ENCODE measurements at regions of chr15 and their contacts with region 1.

Region 1: GRCh38 chr15:66404532-66404931 is 17.8 kb downstream of the MAP2K1 start:
- DNase-seq: no peak
- H3K4me3 ChIP-seq: no peak overlapping the region
- CTCF ChIP-seq: no peak

Region 2: DNA sequence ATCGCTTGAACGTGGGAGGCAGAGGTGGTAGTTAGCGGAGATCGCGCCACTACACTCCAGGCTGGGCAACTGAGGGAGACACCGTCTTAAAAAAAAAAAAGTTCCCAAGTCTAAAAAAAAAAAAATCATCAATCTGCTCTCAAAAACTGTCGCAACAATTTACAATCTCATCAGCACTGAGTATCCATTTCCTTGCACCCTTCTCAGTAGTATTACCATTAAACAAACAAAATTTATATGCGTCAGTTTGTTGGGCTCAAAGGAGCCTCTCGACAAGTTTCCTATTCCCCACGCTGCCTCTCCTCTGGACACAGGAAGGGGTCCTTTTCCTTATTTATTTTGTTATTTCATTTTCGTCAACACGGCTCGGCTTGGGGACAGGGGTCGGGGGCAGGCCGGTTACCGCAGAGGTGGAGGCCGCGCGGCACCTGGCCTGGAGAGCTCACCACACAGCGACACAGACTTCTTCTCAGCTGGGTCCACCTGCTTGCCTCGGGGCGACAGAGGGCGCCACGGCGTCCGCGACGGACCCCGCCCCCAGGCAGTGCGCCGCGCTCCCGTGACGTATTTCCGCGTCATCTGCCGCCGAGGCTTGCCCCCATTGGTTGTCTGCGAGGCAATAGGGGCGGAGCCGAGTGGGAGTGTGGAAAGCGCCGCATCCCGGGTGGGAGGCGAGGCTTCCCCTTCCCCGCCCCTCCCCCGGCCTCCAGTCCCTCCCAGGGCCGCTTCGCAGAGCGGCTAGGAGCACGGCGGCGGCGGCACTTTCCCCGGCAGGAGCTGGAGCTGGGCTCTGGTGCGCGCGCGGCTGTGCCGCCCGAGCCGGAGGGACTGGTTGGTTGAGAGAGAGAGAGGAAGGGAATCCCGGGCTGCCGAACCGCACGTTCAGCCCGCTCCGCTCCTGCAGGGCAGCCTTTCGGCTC is 18.1 kb before region 1 on chr15 and contains the start of gene MAP2K1:
- CTCF ChIA-PET with region 1: interaction called, 15 read pairs
- POLR2A ChIA-PET with region 1: no interaction called
- DNase-seq: peak; percentile 69
- H3K4me3 ChIP-seq: peak within 1 kb of the TSS; percentile 81
- CTCF ChIP-seq: peak; percentile 96

Region 3: DNA sequence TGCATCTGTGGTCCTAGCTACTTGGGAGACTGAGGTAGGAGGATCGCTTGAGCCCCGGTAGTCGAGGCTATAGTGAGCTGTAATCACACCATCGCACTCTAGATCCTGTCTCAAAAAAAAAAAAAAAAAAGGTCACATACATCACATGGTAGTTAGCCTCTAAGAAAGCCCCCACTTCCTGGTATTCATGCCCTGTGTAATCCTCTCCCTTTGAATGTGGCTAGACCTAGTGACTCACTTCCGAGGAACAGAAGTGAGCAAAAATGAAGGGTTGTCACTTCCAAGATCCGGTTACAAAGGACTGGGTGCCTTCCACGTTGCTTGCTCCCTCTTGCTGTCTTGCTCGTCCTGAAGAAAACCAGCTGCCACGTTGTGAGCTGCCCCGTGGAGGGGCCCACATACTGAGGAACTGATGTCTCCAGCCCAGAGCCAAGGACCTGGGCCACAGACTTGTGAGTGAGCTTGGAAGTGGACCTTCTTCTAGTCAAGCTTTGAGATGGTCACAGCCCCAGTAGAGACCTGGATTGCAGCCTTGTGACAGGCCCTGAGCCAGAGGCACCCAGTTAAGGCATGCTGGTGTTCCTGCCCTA is 173.8 kb after region 1 on chr15:
- CTCF ChIA-PET with region 1: no interaction called
- POLR2A ChIA-PET with region 1: no interaction called
- DNase-seq: no peak
- H3K4me3 ChIP-seq: no peak overlapping the region
- CTCF ChIP-seq: no peak

Measured in AG04449 (cell line).